H1 (cell line): ENCODE measurements at regions of chr14 and their contacts with region 1.

Region 1: GRCh38 chr14:99683619-99684355 is at the start of gene CYP46A1:
- DNase-seq: peak; percentile 99
- H3K4me3 ChIP-seq: peak within 1 kb of the TSS; percentile 59 to 100 (median 94)
- H3K27ac ChIP-seq: 0 out of 2 replicates have a peak within 1 kb of the TSS, but pooled peaks have one; percentile 37
- H3K4me1 ChIP-seq: peaks cover 0 to 10% (median 9%) of the 10 kb centered on the region in 4 experiments; a peak in 6 of 7 replicates
- H3K27me3 ChIP-seq: no peaks in the 10 kb centered on the region
- CTCF ChIP-seq: no peak
- EP300 ChIP-seq: no peak
- POLR2A ChIP-seq: no peak; a peak in 1 of 3 replicates
- RAD21 ChIP-seq: no peak
- total RNA-seq, gene CYP46A1: 0.71 and 1.3 TPM in 2 replicates

Region 2: DNA sequence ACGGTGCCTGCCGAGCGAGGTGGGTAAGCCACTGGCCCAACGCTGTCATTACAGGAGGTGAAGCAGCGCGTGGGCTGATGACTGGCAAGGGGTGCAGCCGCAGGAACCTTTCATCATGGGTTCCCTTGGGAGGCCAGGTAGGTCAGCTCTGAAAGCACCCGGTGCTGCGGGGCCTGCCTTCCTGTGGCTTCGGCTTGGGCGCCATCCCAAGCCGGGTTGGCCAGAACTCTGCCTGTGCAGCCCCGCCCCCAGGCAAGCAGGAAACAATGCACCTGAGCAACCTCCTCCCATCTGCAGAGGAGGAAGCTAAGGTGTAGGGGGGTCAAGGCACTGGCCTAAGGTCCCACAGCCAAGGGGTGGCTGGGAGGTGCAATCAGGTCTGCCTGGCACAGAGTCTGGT is 58.8 kb before region 1 on chr14:
- CTCF ChIA-PET with region 1: no interaction called
- POLR2A ChIA-PET with region 1: no interaction called
- DNase-seq: no peak
- H3K4me3 ChIP-seq: no peak overlapping the region
- H3K27ac ChIP-seq: no peak overlapping the region
- H3K4me1 ChIP-seq: peaks cover 0 to 5% (median 1%) of the 10 kb centered on the region in 4 experiments; a peak in 4 of 7 replicates
- H3K27me3 ChIP-seq: no peaks in the 10 kb centered on the region; a peak in 1 of 7 replicates
- CTCF ChIP-seq: no peak
- EP300 ChIP-seq: no peak
- POLR2A ChIP-seq: no peak
- RAD21 ChIP-seq: no peak

Region 3: GRCh38 chr14:99664058-99664936 is 19.5 kb before region 1 on chr14:
- CTCF ChIA-PET with region 1: interaction called, 26 read pairs
- POLR2A ChIA-PET with region 1: interaction called, 4 read pairs
- DNase-seq: peak; percentile 88 to 89
- H3K4me3 ChIP-seq: peak overlapping the region in 3 of 4 experiments; percentile 8 to 28 (median 17); a peak in 3 of 8 replicates
- H3K27ac ChIP-seq: no peak overlapping the region; the same call in 1 of the 2 replicates
- H3K4me1 ChIP-seq: peaks cover 13 to 48% (median 29%) of the 10 kb centered on the region in 4 experiments
- H3K27me3 ChIP-seq: peaks cover 0 to 4% (median 2%) of the 10 kb centered on the region in 4 experiments; a peak in 2 of 7 replicates
- CTCF ChIP-seq: peak in 2 of 3 experiments; percentile 36 to 46; a peak in 3 of 4 replicates
- EP300 ChIP-seq: peak; percentile 8 to 93; a peak in 2 of 3 replicates
- POLR2A ChIP-seq: no peak
- RAD21 ChIP-seq: peak in 1 of 2 experiments; percentile 38; a peak in 1 of 4 replicates

Region 4: DNA sequence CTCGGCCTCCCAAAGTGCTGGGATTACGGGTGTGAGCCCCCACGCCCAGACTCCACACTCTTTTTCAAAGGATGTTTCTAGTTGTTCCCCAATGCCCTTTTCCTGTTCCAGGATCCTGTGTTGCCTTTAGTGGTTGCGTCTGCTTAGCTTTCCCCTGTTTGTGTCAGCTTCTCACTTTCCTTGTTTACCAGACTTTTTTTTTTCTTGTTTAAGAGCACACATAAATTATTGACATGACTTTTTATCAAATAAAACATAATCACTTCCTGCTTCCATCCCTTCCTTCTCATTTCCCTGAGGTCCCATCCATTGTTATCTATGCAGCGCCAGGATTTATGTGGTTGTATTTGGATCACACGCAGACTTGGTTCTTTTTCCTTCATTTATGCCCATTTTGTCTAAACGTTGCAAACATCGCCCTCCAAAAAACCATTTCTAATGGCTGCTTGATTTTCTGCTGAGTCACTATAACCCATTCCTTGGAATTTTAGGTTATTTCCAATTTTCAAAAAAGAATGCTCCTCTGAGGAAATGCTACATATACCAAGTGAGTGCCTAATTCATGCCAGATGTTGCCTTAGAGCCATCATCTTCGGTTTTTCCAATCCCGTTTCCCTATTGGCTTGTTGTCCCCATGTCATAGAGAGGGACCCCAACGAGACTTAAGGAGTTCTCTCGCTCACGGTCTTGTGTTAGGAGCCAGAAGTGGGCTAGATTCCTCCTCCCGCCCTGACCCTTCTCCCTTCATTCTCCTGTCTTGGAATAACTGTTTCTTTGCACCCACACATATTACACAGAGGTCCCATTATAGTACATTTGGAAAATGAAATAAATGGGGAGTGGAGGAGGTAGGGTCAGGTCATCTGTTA is 13.2 kb before region 1 on chr14:
- CTCF ChIA-PET with region 1: interaction called, 26 read pairs
- POLR2A ChIA-PET with region 1: interaction called, 4 read pairs
- DNase-seq: no peak
- H3K4me3 ChIP-seq: no peak overlapping the region
- H3K27ac ChIP-seq: no peak overlapping the region
- H3K4me1 ChIP-seq: peaks cover 15 to 40% (median 30%) of the 10 kb centered on the region in 4 experiments
- H3K27me3 ChIP-seq: no peaks in the 10 kb centered on the region
- CTCF ChIP-seq: no peak
- EP300 ChIP-seq: no peak
- POLR2A ChIP-seq: no peak
- RAD21 ChIP-seq: no peak

Region 5: GRCh38 chr14:99698642-99699041 is 14.9 kb after region 1 on chr14:
- CTCF ChIA-PET with region 1: interaction called, 35 read pairs
- POLR2A ChIA-PET with region 1: no interaction called
- DNase-seq: peak in 1 of 2 experiments; percentile 32
- H3K4me3 ChIP-seq: no peak overlapping the region
- H3K27ac ChIP-seq: no peak overlapping the region
- H3K4me1 ChIP-seq: no peaks in the 10 kb centered on the region
- H3K27me3 ChIP-seq: no peaks in the 10 kb centered on the region
- CTCF ChIP-seq: no peak
- EP300 ChIP-seq: no peak
- POLR2A ChIP-seq: no peak
- RAD21 ChIP-seq: no peak

Region 6: DNA sequence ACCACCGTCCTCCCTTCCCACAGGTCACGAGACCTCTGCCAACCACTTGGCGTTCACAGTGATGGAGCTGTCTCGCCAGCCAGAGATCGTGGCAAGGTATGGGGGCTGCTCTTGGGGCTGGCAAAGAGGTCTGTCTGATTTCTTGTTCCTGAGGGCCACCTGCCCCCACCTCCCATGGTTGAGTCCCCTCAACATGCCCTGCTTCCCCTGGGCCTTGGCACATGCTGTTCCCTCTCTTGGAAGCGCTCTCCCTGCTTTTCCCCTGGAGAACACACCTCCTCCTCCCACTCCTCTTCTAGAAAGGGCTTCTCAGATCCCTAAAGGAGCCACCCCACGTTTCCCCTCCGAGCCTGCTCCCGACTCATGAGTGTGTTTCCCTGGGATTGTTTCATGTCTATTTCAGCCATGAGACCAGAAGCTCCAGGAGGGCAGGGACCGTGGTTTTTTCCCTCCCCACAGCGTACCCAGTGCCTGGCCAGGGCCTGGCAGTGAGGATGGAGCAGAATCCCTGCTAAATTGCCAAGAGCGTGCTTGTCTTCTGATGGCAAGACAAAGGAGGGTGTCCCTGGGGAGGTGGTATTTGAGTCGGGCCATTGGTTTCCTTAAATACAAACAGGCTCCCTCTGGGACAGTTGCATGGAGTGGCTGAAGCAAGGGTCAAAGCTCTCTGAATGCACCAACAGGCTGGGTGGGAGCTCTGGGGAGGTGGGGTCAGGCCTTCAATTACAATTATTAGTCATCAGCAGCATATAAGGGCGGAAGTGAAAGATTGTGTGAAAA is 34.4 kb after region 1 on chr14:
- CTCF ChIA-PET with region 1: interaction called, 36 read pairs
- POLR2A ChIA-PET with region 1: no interaction called
- DNase-seq: no peak
- H3K4me3 ChIP-seq: no peak overlapping the region
- H3K27ac ChIP-seq: no peak overlapping the region
- H3K4me1 ChIP-seq: peaks cover 0 to 2% (median 0%) of the 10 kb centered on the region in 4 experiments; a peak in 3 of 7 replicates
- H3K27me3 ChIP-seq: no peaks in the 10 kb centered on the region
- CTCF ChIP-seq: no peak
- EP300 ChIP-seq: no peak
- POLR2A ChIP-seq: no peak
- RAD21 ChIP-seq: no peak

Region 7: DNA sequence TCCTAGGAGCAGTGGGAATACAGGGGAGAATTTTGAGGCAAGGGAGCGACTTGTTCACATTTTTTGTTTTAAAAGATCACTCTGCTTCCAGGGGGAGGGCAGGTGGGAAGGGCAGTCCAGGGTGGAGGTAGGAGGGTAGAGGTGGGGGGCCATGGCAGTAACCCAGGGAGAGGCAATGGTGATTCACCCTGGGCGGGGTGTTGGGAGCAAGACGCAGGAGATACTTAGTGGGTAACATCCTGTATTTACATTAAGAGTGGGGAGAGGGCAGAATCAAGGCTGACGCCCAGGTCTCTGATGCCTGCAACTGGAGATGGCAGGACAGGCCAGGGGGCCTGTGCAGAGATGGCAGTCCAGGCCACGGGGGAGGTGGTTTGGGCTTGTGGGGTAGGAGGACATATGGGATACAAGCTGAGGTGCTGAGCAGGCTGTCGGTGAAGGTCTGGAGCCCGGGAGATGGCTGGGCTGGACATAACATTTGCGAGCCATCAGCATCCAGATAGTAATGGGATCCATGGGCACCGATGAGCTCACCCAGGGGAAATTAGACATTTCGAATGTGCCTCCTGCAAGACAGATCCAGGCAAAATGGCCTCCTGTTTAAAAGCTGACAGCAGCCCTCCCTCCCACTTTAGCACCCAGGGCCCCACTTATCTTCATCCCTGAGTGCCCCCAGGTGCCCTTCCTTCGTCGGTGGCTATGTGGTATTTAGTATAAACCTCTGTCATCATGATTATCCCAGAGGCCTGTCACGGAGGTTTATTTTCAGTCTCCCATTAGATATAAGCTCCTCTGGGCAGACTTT is 118.7 kb after region 1 on chr14:
- CTCF ChIA-PET with region 1: no interaction called
- POLR2A ChIA-PET with region 1: no interaction called
- DNase-seq: no peak
- H3K4me3 ChIP-seq: no peak overlapping the region
- H3K27ac ChIP-seq: no peak overlapping the region
- H3K4me1 ChIP-seq: peaks cover 0 to 3% (median under 1%) of the 10 kb centered on the region in 4 experiments; a peak in 2 of 7 replicates
- H3K27me3 ChIP-seq: no peaks in the 10 kb centered on the region
- CTCF ChIP-seq: no peak
- EP300 ChIP-seq: no peak
- POLR2A ChIP-seq: no peak
- RAD21 ChIP-seq: no peak

Region 8: DNA sequence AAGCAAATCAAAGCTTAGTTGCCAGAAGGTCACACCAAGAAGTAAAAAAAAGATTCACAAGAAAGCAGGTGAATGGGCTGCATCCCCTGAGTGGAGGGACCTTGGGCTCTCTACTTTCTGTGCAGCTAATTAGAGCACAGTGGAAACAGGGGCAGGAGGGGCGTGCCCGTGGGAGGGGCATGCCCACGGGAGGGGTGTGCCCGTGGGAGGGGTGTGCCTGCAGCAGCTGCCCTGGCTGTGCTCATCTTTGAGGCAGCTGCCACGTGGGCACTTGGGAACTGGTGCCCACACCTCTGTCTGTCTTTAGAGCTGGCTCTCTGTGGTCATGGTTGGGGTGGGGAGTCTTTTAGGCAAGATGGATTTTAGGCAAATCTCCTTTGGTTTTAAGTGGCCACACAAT is 169.4 kb after region 1 on chr14:
- CTCF ChIA-PET with region 1: no interaction called
- POLR2A ChIA-PET with region 1: no interaction called
- DNase-seq: no peak
- H3K4me3 ChIP-seq: no peak overlapping the region
- H3K27ac ChIP-seq: no peak overlapping the region
- H3K4me1 ChIP-seq: no peaks in the 10 kb centered on the region
- H3K27me3 ChIP-seq: no peaks in the 10 kb centered on the region
- CTCF ChIP-seq: no peak
- EP300 ChIP-seq: no peak
- POLR2A ChIP-seq: no peak
- RAD21 ChIP-seq: no peak

Region 9: DNA sequence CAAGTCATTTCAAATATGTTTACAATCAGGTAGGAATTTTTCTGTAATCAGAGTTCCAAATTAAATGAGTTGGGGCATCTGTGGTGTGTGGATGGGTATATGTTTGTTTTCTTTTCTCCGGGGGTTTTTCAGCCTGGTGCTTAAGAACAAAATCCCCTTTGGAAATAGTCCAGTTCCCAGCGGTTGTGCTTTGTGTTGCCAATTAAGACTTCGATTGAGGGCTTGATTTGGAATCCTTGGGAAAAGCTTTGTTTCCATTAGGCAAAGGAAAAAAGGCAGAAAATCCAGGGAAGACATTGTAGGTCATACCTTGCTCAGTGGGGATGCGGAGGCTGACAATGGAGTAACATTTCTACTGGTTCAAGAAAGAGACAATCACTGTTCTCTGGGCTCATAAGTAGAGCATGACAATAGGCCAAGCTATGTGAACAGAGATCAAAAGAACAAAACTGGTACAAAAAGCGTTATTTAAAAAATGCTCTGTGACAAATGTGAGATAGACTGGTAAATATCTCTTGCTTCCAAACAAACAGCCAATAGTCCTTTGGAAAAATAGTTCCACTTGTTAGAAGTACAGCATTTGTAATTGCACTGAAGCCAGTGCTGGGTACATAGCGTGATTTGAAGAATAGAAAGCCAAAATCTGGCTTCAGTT is 189.1 kb after region 1 on chr14:
- CTCF ChIA-PET with region 1: interaction called, 14 read pairs
- POLR2A ChIA-PET with region 1: no interaction called
- DNase-seq: peak; percentile 44 to 57
- H3K4me3 ChIP-seq: peak overlapping the region in 1 of 4 experiments; percentile 36; a peak in 2 of 8 replicates
- H3K27ac ChIP-seq: no peak overlapping the region
- H3K4me1 ChIP-seq: peaks cover 4 to 37% (median 23%) of the 10 kb centered on the region in 4 experiments
- H3K27me3 ChIP-seq: no peaks in the 10 kb centered on the region; a peak in 1 of 7 replicates
- CTCF ChIP-seq: no peak
- EP300 ChIP-seq: peak in 1 of 2 experiments; percentile 80; a peak in 1 of 3 replicates
- POLR2A ChIP-seq: no peak
- RAD21 ChIP-seq: no peak